ENCODE measurements at regions of chr22 and their contacts with region 1.

Region 1: GRCh38 chr22:45863981-45864751 is 112.8 kb downstream of the WNT7B start:
- DNase-seq: peak; percentile 50
- H3K4me3 ChIP-seq: no peak overlapping the region
- H3K27ac ChIP-seq: no peak overlapping the region
- H3K4me1 ChIP-seq: no peaks in the 10 kb centered on the region
- H3K27me3 ChIP-seq: peaks cover 19 to 48% of the 10 kb centered on the region in 2 experiments
- CTCF ChIP-seq: peak; percentile 87 to 88
- POLR2A ChIP-seq: no peak

Region 2: DNA sequence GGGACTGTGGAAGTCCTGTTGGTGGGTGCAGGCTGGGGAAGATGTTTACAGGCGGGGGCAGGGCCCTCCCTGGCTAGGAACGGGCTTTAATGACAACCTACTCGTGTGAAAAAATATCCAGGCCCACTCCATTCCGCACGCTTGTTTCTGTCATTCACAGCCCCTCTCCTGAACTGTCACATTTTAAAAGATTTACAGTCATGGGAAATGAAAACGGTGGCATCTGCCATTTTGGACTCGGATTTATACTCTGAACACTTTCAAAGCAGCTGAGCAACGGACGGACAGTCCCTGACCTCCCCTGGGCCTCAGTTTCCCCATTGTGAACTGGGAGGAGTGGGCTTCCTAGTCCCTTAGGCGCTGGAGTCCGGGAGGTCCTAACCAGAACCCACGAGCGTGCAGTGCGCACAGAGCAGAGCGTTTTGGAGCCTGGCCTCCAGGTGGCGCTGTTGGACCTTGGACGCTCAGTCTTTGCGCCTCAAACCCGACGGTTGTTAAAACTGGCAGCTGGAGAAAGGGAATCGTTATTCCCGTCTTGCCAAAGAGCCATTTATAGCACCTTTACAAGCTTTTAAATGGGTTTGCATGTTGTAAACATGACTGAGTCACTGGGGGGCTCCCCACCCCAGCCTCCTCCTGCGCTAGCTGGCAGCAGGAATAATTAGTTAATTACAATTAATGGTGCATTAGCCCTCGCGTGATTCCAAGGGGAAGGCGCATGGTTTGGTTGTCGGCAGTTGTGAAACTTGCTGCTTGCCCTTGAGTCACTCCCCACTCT is 286.2 kb before region 1 on chr22:
- CTCF ChIA-PET with region 1: interaction called, 21 read pairs
- POLR2A ChIA-PET with region 1: no interaction called
- dilution Hi-C with region 1: no loop called
- intact Hi-C with region 1: loop called (anchors 2 kb)
- DNase-seq: peak; percentile 71
- H3K4me3 ChIP-seq: no peak overlapping the region
- H3K27ac ChIP-seq: no peak overlapping the region
- H3K4me1 ChIP-seq: no peaks in the 10 kb centered on the region
- H3K27me3 ChIP-seq: peaks cover 0 to 2% of the 10 kb centered on the region in 2 experiments
- CTCF ChIP-seq: peak; percentile 89 to 94
- POLR2A ChIP-seq: no peak

Region 3: DNA sequence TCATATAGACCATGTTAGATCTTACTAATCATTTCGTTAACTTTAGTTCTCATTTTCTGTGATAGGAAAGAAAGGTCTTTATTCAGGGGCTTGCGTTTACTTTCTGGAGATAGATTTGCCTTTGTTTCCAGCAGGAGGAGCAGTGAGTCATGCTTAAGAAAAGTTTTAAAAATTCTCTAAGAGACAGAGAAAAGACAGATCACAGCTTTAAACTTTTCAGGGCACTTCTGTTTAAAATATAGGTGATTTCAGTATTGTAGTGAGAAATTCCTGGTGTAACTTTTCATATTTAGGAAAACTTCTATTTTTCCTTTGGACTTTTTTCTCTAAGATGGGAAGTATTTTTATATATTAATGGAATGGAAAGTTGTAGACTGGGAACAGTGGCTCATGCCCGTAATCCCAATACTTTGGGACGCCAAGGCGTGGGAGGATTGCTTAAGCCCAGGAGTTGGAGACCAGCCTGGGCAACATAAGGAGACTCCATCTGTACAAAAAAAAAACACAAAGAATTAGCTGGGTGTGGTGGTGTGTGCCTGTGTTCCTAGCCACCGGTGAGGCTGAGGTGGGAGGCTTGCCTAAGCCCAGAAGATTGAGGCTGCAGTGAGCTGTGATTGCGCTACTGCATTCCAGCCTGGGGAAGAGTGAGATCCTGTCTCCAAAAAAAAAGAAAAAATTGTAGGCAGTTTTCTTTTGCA is 132.2 kb before region 1 on chr22:
- CTCF ChIA-PET with region 1: interaction called, 21 read pairs
- POLR2A ChIA-PET with region 1: no interaction called
- dilution Hi-C with region 1: no loop called
- intact Hi-C with region 1: no loop called
- DNase-seq: no peak
- H3K4me3 ChIP-seq: no peak overlapping the region
- H3K27ac ChIP-seq: no peak overlapping the region
- H3K4me1 ChIP-seq: no peaks in the 10 kb centered on the region
- H3K27me3 ChIP-seq: no peaks in the 10 kb centered on the region
- CTCF ChIP-seq: peak in 1 of 2 donors; percentile 22
- POLR2A ChIP-seq: no peak

Region 4: GRCh38 chr22:45842291-45842991 is 21.7 kb before region 1 on chr22:
- CTCF ChIA-PET with region 1: interaction called, 22 read pairs
- POLR2A ChIA-PET with region 1: no interaction called
- dilution Hi-C with region 1: no loop called
- intact Hi-C with region 1: no loop called
- DNase-seq: no peak
- H3K4me3 ChIP-seq: no peak overlapping the region
- H3K27ac ChIP-seq: no peak overlapping the region
- H3K4me1 ChIP-seq: no peaks in the 10 kb centered on the region
- H3K27me3 ChIP-seq: no peaks in the 10 kb centered on the region
- CTCF ChIP-seq: no peak
- POLR2A ChIP-seq: no peak

Region 5: DNA sequence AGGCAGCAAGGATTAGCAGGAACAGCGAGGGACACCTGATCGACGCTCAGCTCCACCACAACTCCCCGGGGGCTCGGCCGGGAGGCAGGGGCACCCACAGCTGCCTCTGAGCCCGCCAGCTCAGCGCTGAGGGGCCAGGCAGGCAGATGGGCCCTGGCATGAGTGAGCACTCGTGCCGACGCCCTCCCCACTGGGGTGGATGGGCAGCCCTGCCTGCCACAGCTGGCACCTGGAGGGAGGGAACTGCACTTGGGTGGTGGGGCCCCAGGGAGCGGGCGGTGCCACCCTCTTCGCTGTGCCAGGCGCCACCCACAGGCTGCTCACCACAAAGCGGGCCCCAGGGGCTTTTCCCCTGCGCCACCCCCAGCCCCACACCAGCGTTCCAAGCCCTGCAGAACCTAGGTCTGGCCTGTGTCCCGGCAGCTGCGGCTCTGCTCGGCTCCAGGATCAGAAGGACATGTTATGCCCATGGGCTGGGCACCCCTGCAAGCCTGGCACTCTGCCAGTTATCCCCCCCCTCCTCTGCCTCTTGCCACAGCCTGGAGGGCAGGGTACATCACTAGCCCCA is 84.0 kb after region 1 on chr22:
- CTCF ChIA-PET with region 1: interaction called, 10 read pairs
- POLR2A ChIA-PET with region 1: no interaction called
- dilution Hi-C with region 1: no loop called
- intact Hi-C with region 1: no loop called
- DNase-seq: no peak
- H3K4me3 ChIP-seq: no peak overlapping the region
- H3K27ac ChIP-seq: no peak overlapping the region
- H3K4me1 ChIP-seq: no peaks in the 10 kb centered on the region
- H3K27me3 ChIP-seq: no peaks in the 10 kb centered on the region
- CTCF ChIP-seq: no peak
- POLR2A ChIP-seq: no peak

Measured in endothelial cell of umbilical vein (primary cell).